Heart right ventricle (tissue), 16 donors: ENCODE measurements at regions of chr15 and their contacts with region 1.

Region 1: GRCh38 chr15:31352911-31353811 is 26.5 kb downstream of the KLF13 start:
- DNase-seq: peak; percentile 77 to 91
- ATAC-seq: peak; percentile 84 to 95 (median 91)
- H3K4me3 ChIP-seq: peak overlapping the region in 9 of 10 donors; percentile 9 to 41 (median 36)
- H3K27ac ChIP-seq: peak overlapping the region; percentile 83 to 98 (median 94)
- H3K4me1 ChIP-seq: peaks cover 55 to 100% (median 100%) of the 10 kb centered on the region in 9 donors
- H3K27me3 ChIP-seq: no peaks in the 10 kb centered on the region
- CTCF ChIP-seq: peak in 1 of 9 donors; percentile 30

Region 2: DNA sequence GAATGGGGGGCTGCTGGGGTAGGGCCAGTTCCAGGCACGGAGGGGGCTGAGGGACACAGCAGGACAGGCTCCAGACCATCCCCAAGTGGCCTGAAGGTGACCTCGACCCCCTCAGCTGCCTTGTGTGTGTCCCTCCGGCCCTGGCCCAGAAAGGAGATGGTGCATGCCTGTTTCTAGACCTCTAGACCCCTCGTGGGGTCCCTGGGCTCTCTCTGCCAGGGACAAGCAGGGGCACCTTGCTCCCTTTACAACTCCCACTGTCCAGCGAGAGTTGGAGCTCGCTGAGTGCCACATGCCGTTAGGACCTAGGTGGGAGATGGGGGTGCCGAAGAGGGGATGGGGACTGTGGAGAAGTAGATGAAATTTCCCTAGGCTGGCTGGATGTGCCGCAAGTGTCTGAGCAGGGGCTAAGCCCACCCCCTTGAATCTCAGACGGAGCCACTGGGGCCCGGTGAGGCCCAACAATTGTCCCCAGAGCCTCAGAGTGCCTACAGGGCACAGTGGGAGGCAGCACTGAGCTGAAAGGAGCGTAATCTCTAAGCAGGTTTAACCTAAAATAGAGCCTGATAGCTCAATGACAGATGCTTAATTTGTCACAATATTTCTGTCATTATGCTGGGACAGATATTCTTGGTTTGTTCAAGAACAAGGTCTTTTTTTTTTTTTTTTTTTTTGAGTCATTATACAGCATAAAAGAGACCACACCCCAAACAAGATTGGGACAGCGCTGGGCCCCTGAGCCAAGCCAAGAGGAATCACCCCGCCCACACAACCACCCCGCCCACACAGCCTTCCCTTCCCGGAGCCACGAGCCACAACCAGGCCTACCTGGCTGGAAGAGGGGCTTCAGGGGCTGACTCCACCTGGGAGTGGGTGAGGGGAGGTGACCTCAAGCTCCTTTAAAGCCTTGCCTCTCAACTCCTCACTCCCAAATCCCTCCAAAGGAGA is 50.1 kb before region 1 on chr15:
- intact Hi-C with region 1: no loop called
- DNase-seq: peak; percentile 40 to 60
- ATAC-seq: peak in 6 of 8 donors; percentile 22 to 60 (median 50)
- H3K4me3 ChIP-seq: no peak overlapping the region
- H3K27ac ChIP-seq: peak overlapping the region in 2 of 10 donors; percentile 35 to 47
- H3K4me1 ChIP-seq: peaks cover 0 to 80% (median 63%) of the 10 kb centered on the region in 9 donors
- H3K27me3 ChIP-seq: peaks cover 0 to 3% (median 0%) of the 10 kb centered on the region in 7 donors
- CTCF ChIP-seq: peak in 6 of 9 donors; percentile 16 to 30 (median 26)

Region 3: GRCh38 chr15:31338879-31339557 is 14.1 kb before region 1 on chr15:
- intact Hi-C with region 1: loop called in 1 of 10 experiments (anchors 2 kb)
- DNase-seq: peak; percentile 80 to 88
- ATAC-seq: peak; percentile 43 to 86 (median 80)
- H3K4me3 ChIP-seq: peak overlapping the region in 4 of 10 donors; percentile 5 to 25 (median 15)
- H3K27ac ChIP-seq: peak overlapping the region; percentile 30 to 100 (median 80)
- H3K4me1 ChIP-seq: peaks cover 76 to 99% (median 99%) of the 10 kb centered on the region in 9 donors
- H3K27me3 ChIP-seq: no peaks in the 10 kb centered on the region
- CTCF ChIP-seq: no peak

Region 4: GRCh38 chr15:31391687-31392671 is 38.8 kb after region 1 on chr15:
- intact Hi-C with region 1: loop called in 5 of 10 experiments (anchors 2 to 5 kb)
- DNase-seq: peak; percentile 87 to 92
- ATAC-seq: peak; percentile 79 to 87 (median 84)
- H3K4me3 ChIP-seq: peak overlapping the region; percentile 51 to 74 (median 68)
- H3K27ac ChIP-seq: peak overlapping the region; percentile 89 to 99 (median 98)
- H3K4me1 ChIP-seq: peaks cover 0 to 39% (median 28%) of the 10 kb centered on the region in 9 donors
- H3K27me3 ChIP-seq: peaks cover 0 to 11% (median 0%) of the 10 kb centered on the region in 7 donors
- CTCF ChIP-seq: no peak

Region 5: GRCh38 chr15:31396881-31397560 is 43.9 kb after region 1 on chr15:
- intact Hi-C with region 1: loop called in 4 of 10 experiments (anchors 2 to 5 kb)
- DNase-seq: peak; percentile 94 to 95
- ATAC-seq: peak; percentile 82 to 94 (median 92)
- H3K4me3 ChIP-seq: peak overlapping the region in 4 of 10 donors; percentile 4 to 32 (median 14)
- H3K27ac ChIP-seq: peak overlapping the region; percentile 25 to 88 (median 83)
- H3K4me1 ChIP-seq: peaks cover 13 to 59% (median 32%) of the 10 kb centered on the region in 9 donors
- H3K27me3 ChIP-seq: peaks cover 0 to 11% (median 0%) of the 10 kb centered on the region in 7 donors
- CTCF ChIP-seq: peak in 5 of 9 donors; percentile 36 to 60 (median 51)